Activated CD4-positive, alpha-beta T cell treated with anti-CD3 and anti-CD28 coated beads, Interleukin-2, amount 10 ng/mL, durations not matched to agents 24 days and 14 days (primary cell): ENCODE measurements at regions of chr2 and their contacts with region 1.

Region 1: GRCh38 chr2:136378712-136379595 is 261.0 kb upstream of the CXCR4 start:
- DNase-seq: peak; percentile 93
- H3K4me3 Mint-ChIP-seq: no peak overlapping the region
- H3K27ac Mint-ChIP-seq: no peak overlapping the region
- H3K4me1 Mint-ChIP-seq: peaks cover 86% of the 10 kb centered on the region
- H3K27me3 Mint-ChIP-seq: no peaks in the 10 kb centered on the region

Region 2: GRCh38 chr2:135913727-135914365 is 465.1 kb before region 1 on chr2:
- intact Hi-C with region 1: loop called (anchors 1 kb)
- DNase-seq: peak; percentile 86
- H3K4me3 Mint-ChIP-seq: no peak overlapping the region
- H3K27ac Mint-ChIP-seq: no peak overlapping the region
- H3K4me1 Mint-ChIP-seq: peaks cover 18% of the 10 kb centered on the region
- H3K27me3 Mint-ChIP-seq: no peaks in the 10 kb centered on the region

Region 3: GRCh38 chr2:136207030-136207623 is 171.8 kb before region 1 on chr2:
- intact Hi-C with region 1: loop called (anchors 1 kb)
- DNase-seq: peak; percentile 60
- H3K4me3 Mint-ChIP-seq: peak overlapping the region; percentile 8
- H3K27ac Mint-ChIP-seq: peak overlapping the region; percentile 92
- H3K4me1 Mint-ChIP-seq: peaks cover 23% of the 10 kb centered on the region
- H3K27me3 Mint-ChIP-seq: peaks cover 4% of the 10 kb centered on the region

Region 4: DNA sequence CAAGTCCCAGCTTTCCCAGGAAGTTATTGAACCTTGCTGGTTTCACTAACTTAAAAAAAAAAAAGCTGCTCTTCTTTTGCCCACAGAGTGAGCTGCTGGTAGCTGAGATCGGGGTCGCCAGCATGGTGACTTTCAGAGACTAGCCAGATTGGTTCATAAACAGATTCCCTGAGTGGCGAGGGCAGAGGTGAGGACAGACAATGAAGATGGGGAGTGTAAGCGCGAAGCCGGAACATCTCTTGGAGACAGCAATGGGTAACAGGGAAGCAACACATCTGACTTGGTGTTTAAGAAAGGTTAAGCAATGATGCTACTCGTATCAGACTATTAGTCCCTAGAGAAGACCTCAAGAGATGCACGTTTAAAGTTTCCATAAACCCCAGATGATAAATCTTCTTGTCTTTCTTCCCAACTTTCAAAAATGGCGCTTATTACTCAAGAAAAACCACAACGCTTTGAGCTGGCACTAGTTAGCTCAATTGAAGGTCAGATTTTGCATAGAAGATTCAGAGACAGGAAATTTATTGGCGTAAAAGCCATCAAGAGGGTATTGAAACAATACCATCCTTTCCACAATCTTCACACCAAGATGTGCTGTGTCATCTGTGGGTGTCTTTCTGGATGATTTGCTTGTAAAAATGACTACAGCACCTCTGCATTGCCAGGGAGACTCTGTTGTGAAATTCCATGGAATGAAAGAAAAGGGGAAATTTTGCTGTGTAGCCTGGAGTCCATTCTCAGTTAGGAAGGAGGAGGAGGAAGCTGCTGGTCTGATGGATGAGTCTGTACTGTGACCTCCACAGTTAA is 68.0 kb before region 1 on chr2:
- intact Hi-C with region 1: loop called (anchors 1 kb)
- DNase-seq: no peak
- H3K4me3 Mint-ChIP-seq: peak overlapping the region; percentile 30
- H3K27ac Mint-ChIP-seq: peak overlapping the region; percentile 86
- H3K4me1 Mint-ChIP-seq: peaks cover 22% of the 10 kb centered on the region
- H3K27me3 Mint-ChIP-seq: no peaks in the 10 kb centered on the region

Region 5: GRCh38 chr2:136319651-136320050 is 59.3 kb before region 1 on chr2:
- intact Hi-C with region 1: loop called (anchors 1 kb)
- DNase-seq: no peak
- H3K4me3 Mint-ChIP-seq: peak overlapping the region; percentile 55
- H3K27ac Mint-ChIP-seq: peak overlapping the region; percentile 71
- H3K4me1 Mint-ChIP-seq: peaks cover 45% of the 10 kb centered on the region
- H3K27me3 Mint-ChIP-seq: peaks cover 1% of the 10 kb centered on the region

Region 6: GRCh38 chr2:136362676-136363390 is 16.1 kb before region 1 on chr2:
- intact Hi-C with region 1: loop called (anchors 1 kb)
- DNase-seq: peak; percentile 75
- H3K4me3 Mint-ChIP-seq: peak overlapping the region; percentile 34
- H3K27ac Mint-ChIP-seq: peak overlapping the region; percentile 57
- H3K4me1 Mint-ChIP-seq: peaks cover 40% of the 10 kb centered on the region
- H3K27me3 Mint-ChIP-seq: no peaks in the 10 kb centered on the region

Region 7: GRCh38 chr2:136517716-136518115 is 138.8 kb after region 1 on chr2:
- intact Hi-C with region 1: no loop called
- DNase-seq: no peak
- H3K4me3 Mint-ChIP-seq: no peak overlapping the region
- H3K27ac Mint-ChIP-seq: no peak overlapping the region
- H3K4me1 Mint-ChIP-seq: no peaks in the 10 kb centered on the region
- H3K27me3 Mint-ChIP-seq: peaks cover 2% of the 10 kb centered on the region

Region 8: DNA sequence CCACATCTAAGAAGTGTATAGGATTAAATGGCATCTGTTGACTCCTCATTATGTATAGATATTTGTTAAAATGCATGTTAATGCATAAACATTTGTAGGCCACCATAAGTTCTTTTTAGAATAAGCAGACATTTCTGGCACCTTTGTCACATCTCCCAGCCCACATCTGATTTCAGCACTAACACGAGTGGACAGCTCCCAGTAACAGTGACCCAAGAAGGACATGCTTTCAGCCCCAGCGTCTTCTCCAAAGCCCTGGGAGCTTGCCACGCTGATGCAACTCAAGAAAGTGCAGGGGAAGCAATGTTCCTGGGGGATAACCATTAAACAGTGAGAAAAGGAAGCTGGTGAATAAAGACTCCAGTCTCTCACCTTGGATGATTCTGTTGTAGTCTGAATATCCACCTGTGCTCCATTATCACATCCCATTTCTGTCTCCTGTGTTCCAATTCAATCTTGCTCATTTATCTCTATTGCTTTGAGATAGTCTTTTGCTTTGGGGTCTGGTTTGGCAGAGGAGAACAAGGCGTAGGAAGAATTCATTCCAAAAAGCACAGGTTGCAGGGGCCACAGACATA is 203.8 kb after region 1 on chr2:
- intact Hi-C with region 1: no loop called
- DNase-seq: peak; percentile 80
- H3K4me3 Mint-ChIP-seq: no peak overlapping the region
- H3K27ac Mint-ChIP-seq: no peak overlapping the region
- H3K4me1 Mint-ChIP-seq: no peaks in the 10 kb centered on the region
- H3K27me3 Mint-ChIP-seq: no peaks in the 10 kb centered on the region